ENCODE measurements at regions of chr3 and their contacts with region 1.

Region 1: DNA sequence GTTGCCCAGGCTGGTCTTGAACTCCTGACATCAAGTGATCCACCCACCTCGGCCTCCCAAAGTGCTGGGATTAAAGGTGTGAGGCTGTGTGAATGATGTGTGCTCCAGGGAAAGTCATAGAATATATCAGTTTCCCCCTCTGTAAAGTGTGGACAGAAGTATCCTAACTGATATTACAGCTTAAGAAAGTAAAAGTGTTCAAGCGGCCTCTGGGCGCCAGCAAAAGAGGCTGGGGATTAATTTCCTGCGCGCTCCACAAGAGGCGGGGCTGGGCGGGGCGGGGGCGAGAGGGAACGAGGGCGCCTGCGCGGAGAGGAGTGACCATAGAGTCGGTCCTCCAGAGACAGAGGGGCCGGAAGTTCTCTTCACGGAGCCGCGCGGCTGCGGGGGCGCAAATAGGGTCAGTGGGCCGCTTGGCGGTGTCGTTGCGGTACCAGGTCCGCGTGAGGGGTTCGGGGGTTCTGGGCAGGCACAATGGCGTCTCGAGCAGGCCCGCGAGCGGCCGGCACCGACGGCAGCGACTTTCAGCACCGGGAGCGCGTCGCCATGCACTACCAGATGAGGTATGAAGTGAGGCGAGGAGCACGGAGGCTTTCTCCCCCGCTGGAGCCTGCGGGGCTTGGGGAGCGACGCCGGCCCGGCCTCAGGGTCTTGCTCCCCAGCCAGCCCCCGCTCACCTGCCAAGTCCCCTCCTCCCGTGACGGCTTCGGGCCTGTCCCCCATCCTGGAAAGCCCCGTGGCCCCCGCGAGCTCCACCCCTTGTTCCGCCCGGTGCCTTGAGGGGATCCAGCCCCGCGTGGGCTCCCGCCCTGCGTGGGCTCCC is at the start of gene JAGN1:
- DNase-seq: peak; percentile 85
- ATAC-seq: peak; percentile 86
- H3K4me3 Mint-ChIP-seq: peak within 1 kb of the TSS; percentile 94
- H3K27ac Mint-ChIP-seq: peak within 1 kb of the TSS; percentile 97
- H3K4me1 Mint-ChIP-seq: peaks cover 44% of the 10 kb centered on the region
- H3K27me3 Mint-ChIP-seq: no peaks in the 10 kb centered on the region
- CTCF ChIP-seq: no peak
- total RNA-seq, gene JAGN1: 30.9 and 32.1 TPM in 2 replicates

Region 2: DNA sequence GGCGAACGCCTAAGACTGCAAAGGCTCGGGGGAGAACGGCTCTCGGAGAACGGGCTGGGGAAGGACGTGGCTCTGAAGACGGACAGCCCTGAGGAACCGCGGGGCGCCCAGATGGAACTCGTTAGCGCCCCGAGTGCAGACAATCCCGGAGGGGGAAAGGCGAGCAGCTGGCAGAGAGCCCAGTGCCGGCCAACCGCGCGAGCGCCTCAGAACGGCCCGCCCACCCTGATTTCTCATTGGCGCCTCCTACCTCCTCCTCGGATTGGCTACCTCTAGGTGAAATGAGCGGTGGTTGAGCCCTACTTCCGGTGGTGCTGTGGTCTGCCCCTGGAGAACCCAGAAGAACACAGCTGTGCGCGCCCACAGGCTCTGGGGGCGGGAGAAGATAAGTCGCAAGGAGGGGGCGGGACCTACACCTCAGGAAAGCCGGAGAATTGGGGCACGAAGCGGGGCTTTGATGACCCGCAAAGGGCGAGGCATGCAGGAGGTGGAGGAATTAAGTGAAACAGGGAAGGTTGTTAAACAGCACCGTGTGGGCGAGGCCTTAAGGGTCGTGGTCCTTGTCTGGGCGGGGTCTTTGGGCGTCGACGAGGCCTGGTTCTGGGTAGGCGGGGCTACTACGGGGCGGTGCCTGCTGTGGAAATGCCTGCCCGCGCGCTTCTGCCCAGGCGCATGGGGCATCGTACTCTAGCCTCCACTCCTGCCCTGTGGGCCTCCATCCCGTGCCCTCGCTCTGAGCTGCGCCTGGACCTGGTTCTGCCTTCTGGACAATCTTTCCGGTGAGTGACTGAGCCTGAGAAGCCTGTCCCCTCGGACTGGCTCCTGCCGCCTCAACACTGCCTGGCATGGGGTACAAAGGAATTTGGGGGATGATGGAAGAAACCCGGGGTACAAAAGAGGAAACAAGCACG is 140.6 kb before region 1 on chr3 and contains the start of gene OGG1:
- CTCF ChIA-PET with region 1: no interaction called
- POLR2A ChIA-PET with region 1: interaction called, 12 read pairs
- intact Hi-C with region 1: no loop called
- DNase-seq: peak; percentile 89
- ATAC-seq: peak; percentile 90
- H3K4me3 Mint-ChIP-seq: peak within 1 kb of the TSS; percentile 94
- H3K27ac Mint-ChIP-seq: peak within 1 kb of the TSS; percentile 95
- H3K4me1 Mint-ChIP-seq: peaks cover 48% of the 10 kb centered on the region
- H3K27me3 Mint-ChIP-seq: no peaks in the 10 kb centered on the region
- CTCF ChIP-seq: no peak
- total RNA-seq, gene OGG1: 43.5 and 60.7 TPM in 2 replicates

Region 3: DNA sequence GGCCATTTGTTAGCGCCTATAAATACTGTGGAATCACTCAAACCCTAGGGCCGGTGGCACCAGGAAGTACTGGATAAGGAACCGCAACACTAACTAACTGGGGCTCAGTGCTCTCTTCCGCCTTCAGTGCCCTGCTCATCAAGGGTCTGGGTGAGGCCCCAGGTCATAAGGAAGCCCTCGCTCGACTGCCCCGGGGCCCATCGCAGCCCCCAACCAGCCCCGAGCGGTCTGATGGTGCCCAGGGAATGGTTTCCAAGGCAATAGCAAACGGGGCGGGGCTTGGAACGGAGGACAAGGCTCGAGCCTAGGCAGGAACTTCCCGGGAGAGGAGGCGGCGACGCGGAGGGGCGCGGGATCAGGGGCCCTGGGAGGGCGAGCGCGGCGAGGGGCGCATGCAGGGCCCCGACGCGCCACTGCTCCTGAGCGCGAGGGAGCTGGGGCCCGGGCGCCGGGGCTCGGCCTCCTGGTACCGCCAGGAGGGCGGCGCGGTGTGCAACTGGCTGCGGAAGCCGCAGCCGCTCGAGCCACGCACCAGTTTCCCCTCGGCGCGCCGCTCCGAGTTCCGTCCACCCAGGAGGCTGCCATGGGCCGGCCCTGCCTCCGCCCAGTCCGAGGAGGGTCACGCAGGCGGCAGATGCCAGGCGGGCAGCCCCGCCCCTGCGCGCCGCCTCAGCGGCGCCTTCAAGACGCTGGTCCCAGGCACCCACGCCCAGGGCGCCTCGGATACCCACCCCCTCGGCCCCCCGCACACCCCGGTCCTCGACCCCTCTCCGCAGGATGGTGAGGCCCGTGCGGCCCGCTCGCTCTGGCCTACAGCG is 80.6 kb before region 1 on chr3 and contains the start of gene TTLL3:
- CTCF ChIA-PET with region 1: no interaction called
- POLR2A ChIA-PET with region 1: interaction called, 14 read pairs
- intact Hi-C with region 1: no loop called
- DNase-seq: peak; percentile 55
- ATAC-seq: peak; percentile 69
- H3K4me3 Mint-ChIP-seq: peak within 1 kb of the TSS; percentile 91
- H3K27ac Mint-ChIP-seq: peak within 1 kb of the TSS; percentile 98
- H3K4me1 Mint-ChIP-seq: peaks cover 33% of the 10 kb centered on the region
- H3K27me3 Mint-ChIP-seq: no peaks in the 10 kb centered on the region
- CTCF ChIP-seq: no peak
- total RNA-seq, gene TTLL3: 51.4 and 61.9 TPM in 2 replicates

Region 4: DNA sequence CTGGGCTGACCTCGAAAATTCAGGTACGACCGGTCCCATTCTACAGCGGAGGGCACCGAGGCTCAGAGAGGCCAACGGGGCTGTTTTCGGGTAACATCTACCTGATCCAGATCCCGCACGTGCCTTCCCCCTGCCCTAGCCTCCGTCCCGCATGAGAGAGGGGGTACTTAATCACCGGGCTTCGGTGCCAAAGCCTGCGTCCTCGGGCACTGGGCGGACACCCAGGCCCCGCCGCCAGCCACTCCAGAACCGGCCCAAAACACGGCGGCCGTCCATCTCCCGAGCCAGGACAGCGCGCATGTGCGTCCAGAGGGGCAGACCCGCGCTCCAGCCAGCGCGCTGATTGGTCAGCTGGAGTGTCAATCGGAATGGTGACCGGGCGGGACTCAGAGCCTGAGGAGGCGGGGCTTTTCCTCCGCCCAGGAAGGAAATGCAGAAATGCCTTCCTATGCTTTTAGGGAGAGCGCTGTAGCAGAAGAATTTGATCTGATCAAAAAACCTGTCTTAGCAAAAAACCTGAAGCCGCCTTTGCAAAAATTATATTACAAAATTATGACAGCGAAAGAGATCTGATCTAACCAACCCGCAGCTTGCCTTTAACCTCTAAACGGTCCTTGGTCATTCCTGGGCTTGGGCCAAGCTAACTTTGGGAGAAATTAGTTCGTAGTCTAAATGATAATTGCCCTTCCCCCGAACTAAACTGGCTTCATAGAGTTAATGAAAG is 46.6 kb before region 1 on chr3 and contains the start of gene RPUSD3:
- CTCF ChIA-PET with region 1: interaction called, 3 read pairs
- POLR2A ChIA-PET with region 1: interaction called, 6 read pairs
- intact Hi-C with region 1: loop called (anchors 1 kb)
- DNase-seq: peak; percentile 95
- ATAC-seq: peak; percentile 100
- H3K4me3 Mint-ChIP-seq: peak within 1 kb of the TSS; percentile 98
- H3K27ac Mint-ChIP-seq: peak within 1 kb of the TSS; percentile 86
- H3K4me1 Mint-ChIP-seq: peaks cover 20% of the 10 kb centered on the region
- H3K27me3 Mint-ChIP-seq: no peaks in the 10 kb centered on the region
- CTCF ChIP-seq: no peak
- total RNA-seq, gene RPUSD3: 49.5 and 55.7 TPM in 2 replicates

Region 5: GRCh38 chr3:9915254-9916141 is 25.0 kb after region 1 on chr3:
- CTCF ChIA-PET with region 1: no interaction called
- POLR2A ChIA-PET with region 1: interaction called, 11 read pairs
- intact Hi-C with region 1: loop called (anchors 1 kb)
- DNase-seq: peak; percentile 22
- ATAC-seq: peak; percentile 61
- H3K4me3 Mint-ChIP-seq: peak overlapping the region; percentile 78
- H3K27ac Mint-ChIP-seq: no peak overlapping the region
- H3K4me1 Mint-ChIP-seq: peaks cover 17% of the 10 kb centered on the region
- H3K27me3 Mint-ChIP-seq: peaks cover 10% of the 10 kb centered on the region
- CTCF ChIP-seq: no peak

Region 6: GRCh38 chr3:9946112-9947024 is 55.9 kb after region 1 on chr3:
- CTCF ChIA-PET with region 1: interaction called, 4 read pairs
- POLR2A ChIA-PET with region 1: interaction called, 6 read pairs
- intact Hi-C with region 1: loop called (anchors 1 kb)
- DNase-seq: peak; percentile 75
- ATAC-seq: peak; percentile 91
- H3K4me3 Mint-ChIP-seq: peak overlapping the region; percentile 79
- H3K27ac Mint-ChIP-seq: peak overlapping the region; percentile 79
- H3K4me1 Mint-ChIP-seq: peaks cover 11% of the 10 kb centered on the region
- H3K27me3 Mint-ChIP-seq: no peaks in the 10 kb centered on the region
- CTCF ChIP-seq: no peak

Region 7: DNA sequence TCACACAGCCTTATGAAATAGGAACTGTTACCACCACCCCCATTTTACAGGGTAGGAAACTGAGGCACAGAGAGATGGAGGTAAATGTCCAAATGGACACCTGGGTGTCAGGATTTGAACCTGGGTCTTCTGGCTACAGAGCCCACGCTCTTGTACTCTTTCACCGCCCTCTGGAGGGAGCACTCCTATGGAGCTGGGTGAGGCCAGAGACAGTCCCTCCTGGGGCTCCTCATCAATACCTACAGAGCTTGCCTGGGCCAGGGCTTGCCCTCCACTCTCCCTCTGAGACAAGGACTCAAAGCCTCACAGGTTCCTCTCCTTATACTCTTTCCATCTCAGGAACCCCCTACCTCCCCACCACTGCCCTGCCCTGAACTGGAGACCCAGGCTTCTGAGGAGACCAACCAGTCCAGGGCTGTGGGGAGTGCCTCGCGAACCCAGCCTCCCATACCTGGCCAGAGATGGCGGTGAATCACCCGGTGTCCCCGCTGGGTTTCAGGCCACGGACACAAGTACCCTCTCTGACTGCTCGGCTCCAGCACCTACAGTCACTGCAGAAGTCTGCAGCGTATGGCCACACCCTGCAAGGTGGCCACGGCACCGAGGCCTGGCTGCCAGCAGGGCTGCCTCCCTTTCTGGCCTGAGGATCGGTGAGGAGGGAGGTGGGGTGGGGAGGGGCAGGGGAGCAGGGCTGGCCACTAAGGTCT is 637.0 kb after region 1 on chr3:
- CTCF ChIA-PET with region 1: no interaction called
- POLR2A ChIA-PET with region 1: no interaction called
- intact Hi-C with region 1: no loop called
- DNase-seq: no peak
- ATAC-seq: no peak
- H3K4me3 Mint-ChIP-seq: no peak overlapping the region
- H3K27ac Mint-ChIP-seq: no peak overlapping the region
- H3K4me1 Mint-ChIP-seq: no peaks in the 10 kb centered on the region
- H3K27me3 Mint-ChIP-seq: peaks cover 23% of the 10 kb centered on the region
- CTCF ChIP-seq: no peak